AG04449 (cell line): ENCODE measurements at regions of chr5 and their contacts with region 1.

Region 1: GRCh38 chr5:132820162-132820754 is 7.2 kb downstream of the SOWAHA start:
- DNase-seq: peak; percentile 37
- H3K4me3 ChIP-seq: no peak overlapping the region
- CTCF ChIP-seq: peak; percentile 82

Region 2: DNA sequence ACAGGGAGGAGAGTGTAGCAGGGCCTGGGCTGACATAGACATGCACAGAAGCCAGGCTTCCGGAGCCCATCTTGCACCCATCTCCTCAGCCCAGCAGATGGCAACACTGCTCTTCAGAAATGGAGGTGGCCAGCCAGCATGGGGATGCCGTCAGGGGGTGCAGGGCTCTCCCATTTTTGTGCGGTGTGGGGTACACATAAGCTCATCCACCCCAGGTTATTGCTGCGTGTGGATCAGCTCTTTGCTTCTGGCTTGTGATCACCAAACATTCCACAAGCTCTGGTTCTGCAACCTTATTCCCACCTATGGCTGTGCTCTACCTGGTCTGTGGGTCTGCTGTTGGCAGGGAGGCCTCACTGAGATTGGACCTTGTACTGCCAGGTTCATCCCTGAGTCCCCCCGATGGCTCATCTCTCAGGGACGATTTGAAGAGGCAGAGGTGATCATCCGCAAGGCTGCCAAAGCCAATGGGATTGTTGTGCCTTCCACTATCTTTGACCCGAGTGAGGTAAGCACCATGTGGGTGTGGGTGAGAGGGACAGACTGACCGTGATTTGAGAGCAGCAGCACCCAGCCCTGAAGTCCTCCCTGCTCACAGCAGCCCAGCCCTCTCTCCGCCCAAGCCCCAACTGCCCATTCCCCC is 433.5 kb before region 1 on chr5:
- CTCF ChIA-PET with region 1: interaction called, 102 read pairs
- POLR2A ChIA-PET with region 1: no interaction called
- DNase-seq: no peak
- H3K4me3 ChIP-seq: no peak overlapping the region
- CTCF ChIP-seq: peak; percentile 94

Region 3: DNA sequence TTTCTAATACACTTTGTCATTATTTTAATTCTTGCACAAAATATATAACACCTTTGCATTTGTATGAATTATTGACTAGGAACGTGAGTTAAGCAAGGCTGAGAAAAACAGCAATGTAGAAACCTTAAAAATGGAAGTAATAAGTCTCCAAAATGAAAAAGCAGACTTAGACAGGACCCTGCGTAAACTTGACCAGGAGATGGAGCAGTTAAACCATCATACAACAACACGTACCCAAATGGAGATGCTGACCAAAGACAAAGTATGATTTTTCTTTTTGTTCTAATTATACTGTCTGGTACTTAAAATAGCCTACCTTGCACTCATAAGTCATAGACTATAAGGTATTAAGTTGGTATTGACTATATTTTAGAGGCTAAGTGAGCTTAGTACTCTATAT is 229.1 kb before region 1 on chr5:
- CTCF ChIA-PET with region 1: interaction called, 15 read pairs
- POLR2A ChIA-PET with region 1: no interaction called
- DNase-seq: no peak
- H3K4me3 ChIP-seq: no peak overlapping the region
- CTCF ChIP-seq: no peak

Region 4: DNA sequence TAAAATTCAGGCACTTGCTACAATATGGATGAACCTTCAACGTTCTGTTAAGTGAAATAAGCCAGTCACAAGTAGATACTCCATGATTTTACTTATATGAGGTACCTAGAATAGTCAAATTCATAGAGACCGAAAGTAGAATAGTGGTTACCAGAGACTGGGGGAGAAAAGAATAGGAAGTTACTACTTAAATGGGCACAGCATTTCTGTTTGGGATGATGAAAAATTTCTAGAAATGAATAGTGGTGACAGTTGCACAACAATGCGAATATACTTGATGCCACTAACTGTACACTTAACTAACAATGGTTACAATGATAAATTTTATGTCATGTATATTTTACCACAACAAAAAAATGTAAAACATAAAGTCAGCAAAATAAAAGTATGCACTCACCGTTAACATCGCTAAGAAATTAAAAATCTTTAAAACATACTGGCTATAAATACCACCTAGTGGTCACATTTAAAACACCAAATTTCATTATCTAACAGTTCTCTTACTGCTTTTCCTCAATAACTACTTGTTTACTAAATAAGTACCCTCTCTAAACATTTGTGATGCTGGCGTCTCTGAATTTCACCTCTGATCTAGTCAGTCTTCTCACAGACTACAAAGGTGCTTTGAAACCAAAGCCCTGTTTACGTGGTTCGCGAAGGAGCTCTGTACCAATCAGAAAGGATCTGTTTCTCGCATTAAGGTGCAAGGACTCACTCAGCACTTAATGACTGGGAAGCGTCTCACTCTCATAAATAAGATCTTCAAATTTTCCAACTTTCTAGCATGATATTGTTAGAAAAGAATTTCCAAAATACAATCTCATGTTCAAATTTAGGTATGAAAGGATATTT is 105.6 kb before region 1 on chr5:
- CTCF ChIA-PET with region 1: interaction called, 17 read pairs
- POLR2A ChIA-PET with region 1: no interaction called
- DNase-seq: no peak
- H3K4me3 ChIP-seq: no peak overlapping the region
- CTCF ChIP-seq: no peak

Region 5: DNA sequence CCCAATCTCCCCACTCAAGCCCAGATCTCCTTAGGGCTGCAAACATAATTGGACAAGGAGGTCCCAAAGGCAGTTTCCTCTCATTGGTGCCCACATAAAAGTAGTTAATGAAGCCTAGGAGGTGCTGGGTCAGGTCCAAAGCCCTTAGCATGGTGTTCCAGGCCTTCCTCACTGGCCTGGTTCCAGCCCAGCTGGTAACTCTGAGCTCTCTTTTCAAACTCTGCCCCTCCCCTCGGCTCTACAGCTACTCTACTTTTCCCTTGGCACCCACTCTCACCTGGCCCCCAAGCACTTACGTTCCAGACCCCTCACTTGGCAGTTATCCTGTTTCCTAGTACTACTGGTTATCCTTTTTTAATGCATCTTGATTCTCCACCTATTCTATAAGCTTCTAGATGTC is 53.1 kb before region 1 on chr5:
- CTCF ChIA-PET with region 1: interaction called, 18 read pairs
- POLR2A ChIA-PET with region 1: no interaction called
- DNase-seq: no peak
- H3K4me3 ChIP-seq: no peak overlapping the region
- CTCF ChIP-seq: no peak

Region 6: GRCh38 chr5:132807163-132807838 is 13.0 kb before region 1 on chr5:
- CTCF ChIA-PET with region 1: interaction called, 74 read pairs
- POLR2A ChIA-PET with region 1: no interaction called
- DNase-seq: no peak
- H3K4me3 ChIP-seq: no peak overlapping the region
- CTCF ChIP-seq: no peak

Region 7: DNA sequence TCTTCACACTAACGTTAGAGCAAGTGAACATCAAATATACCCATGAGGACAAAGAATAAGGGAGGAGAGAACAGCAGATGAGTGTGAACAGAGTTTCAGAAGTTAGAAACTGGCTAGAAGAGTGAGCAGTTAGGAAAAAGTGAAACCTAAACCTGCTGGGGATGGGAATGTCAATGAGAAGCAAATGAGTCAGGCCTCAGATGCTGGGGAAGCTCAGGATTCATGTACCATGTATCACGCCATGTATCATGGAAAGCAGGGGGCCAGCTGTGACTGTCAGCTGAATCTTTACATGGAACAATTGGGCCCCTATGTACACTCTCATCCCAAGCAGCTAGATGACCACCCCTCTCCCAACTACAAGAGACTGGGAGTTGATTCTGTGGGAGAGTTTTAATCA is 29.8 kb after region 1 on chr5:
- CTCF ChIA-PET with region 1: interaction called, 18 read pairs
- POLR2A ChIA-PET with region 1: interaction called, 3 read pairs
- DNase-seq: no peak
- H3K4me3 ChIP-seq: no peak overlapping the region
- CTCF ChIP-seq: no peak